ENCODE measurements at regions of chr4 and their contacts with region 1.

Region 1: GRCh38 chr4:176383273-176384077 is 63.7 kb downstream of the SPCS3 start:
- DNase-seq: peak in 2 of 5 donors; percentile 11 to 21
- ATAC-seq: peak in 3 of 4 donors; percentile 12 to 74 (median 32)
- H3K4me3 ChIP-seq: peak overlapping the region in 6 of 12 donors; percentile 4 to 33 (median 10)
- H3K27ac ChIP-seq: peak overlapping the region in 10 of 12 donors; percentile 12 to 81 (median 56)
- H3K4me1 ChIP-seq: peaks cover 0 to 21% (median 0%) of the 10 kb centered on the region in 12 donors
- H3K27me3 ChIP-seq: no peaks in the 10 kb centered on the region
- CTCF ChIP-seq: no peak
- POLR2A ChIP-seq: no peak

Region 2: GRCh38 chr4:176492646-176493302 is 109.3 kb after region 1 on chr4:
- intact Hi-C with region 1: loop called in 6 of 10 experiments (anchors 5 to 10 kb)
- DNase-seq: no peak
- ATAC-seq: peak; percentile 72 to 89 (median 77)
- H3K4me3 ChIP-seq: peak overlapping the region in 3 of 12 donors; percentile 13 to 28 (median 20)
- H3K27ac ChIP-seq: peak overlapping the region in 11 of 12 donors; percentile 14 to 76 (median 56)
- H3K4me1 ChIP-seq: peaks cover 0 to 3% (median 0%) of the 10 kb centered on the region in 12 donors
- H3K27me3 ChIP-seq: no peaks in the 10 kb centered on the region
- CTCF ChIP-seq: no peak
- POLR2A ChIP-seq: no peak

Region 3: DNA sequence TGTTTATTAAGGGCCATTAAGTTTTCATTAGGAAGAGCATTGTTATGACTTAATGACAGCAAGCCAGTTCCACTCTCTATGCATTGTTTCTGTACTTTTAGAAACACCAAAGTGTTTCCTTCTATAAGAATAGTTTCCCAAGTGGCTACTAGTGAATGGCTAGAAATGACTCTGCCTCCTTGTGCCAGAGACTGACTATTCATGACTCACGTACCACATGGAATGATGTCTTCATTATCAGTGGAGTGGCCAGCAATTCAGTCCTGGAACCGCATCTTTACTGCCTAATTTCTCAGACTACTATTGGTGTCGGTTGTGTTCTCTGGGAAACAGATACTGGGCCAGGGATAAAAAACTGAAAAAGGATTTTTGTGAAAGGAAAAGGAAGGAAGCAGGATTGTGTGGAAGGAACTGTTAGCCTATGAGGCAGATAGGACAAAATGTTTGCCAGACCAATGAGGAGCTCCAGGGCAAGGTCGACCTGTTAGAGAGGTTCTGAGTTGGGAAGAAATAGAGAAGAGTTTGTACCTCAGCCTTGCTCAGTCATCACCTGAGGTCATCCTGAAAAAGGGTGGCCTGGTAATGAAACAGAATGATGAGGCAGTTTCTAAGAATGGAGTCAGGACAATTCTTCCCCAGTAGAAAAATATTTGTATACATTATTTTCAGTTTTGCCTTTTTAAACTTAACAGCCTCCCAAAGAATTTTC is 154.9 kb after region 1 on chr4:
- intact Hi-C with region 1: loop called in 3 of 10 experiments (anchors 2 to 10 kb)
- DNase-seq: peak in 1 of 5 donors; percentile 17
- ATAC-seq: peak; percentile 15 to 74 (median 48)
- H3K4me3 ChIP-seq: no peak overlapping the region
- H3K27ac ChIP-seq: peak overlapping the region in 9 of 12 donors; percentile 40 to 79 (median 62)
- H3K4me1 ChIP-seq: peaks cover 0 to 13% (median 0%) of the 10 kb centered on the region in 12 donors
- H3K27me3 ChIP-seq: no peaks in the 10 kb centered on the region
- CTCF ChIP-seq: no peak
- POLR2A ChIP-seq: no peak

Region 4: DNA sequence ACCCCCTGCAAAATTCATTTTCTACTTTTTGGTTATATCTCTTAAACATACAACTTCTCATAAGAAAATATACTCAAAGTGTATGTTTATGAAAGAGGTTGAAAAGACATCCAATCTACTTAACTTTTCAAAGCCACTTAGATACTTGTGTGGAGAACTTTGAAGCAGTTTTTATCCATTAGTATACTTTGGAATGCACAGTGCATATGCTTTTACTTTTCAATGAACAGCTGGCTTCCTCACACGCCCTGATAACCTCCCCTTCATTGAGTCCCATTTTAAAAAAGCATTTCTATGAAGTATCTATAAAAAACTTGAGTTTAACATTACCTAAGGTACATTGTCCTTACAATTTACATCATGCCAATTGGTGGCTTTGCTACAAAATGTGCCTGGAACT is 335.4 kb after region 1 on chr4:
- intact Hi-C with region 1: loop called in 1 of 10 experiments (anchors 10 kb)
- DNase-seq: no peak
- ATAC-seq: no peak
- H3K4me3 ChIP-seq: no peak overlapping the region
- H3K27ac ChIP-seq: no peak overlapping the region
- H3K4me1 ChIP-seq: peaks cover 0 to 5% (median 0%) of the 10 kb centered on the region in 12 donors
- H3K27me3 ChIP-seq: no peaks in the 10 kb centered on the region
- CTCF ChIP-seq: no peak
- POLR2A ChIP-seq: no peak

Region 5: GRCh38 chr4:176949029-176949428 is 565.6 kb after region 1 on chr4:
- intact Hi-C with region 1: no loop called
- DNase-seq: peak in 2 of 5 donors; percentile 28
- ATAC-seq: peak in 1 of 4 donors; percentile 14
- H3K4me3 ChIP-seq: no peak overlapping the region
- H3K27ac ChIP-seq: no peak overlapping the region
- H3K4me1 ChIP-seq: no peaks in the 10 kb centered on the region
- H3K27me3 ChIP-seq: no peaks in the 10 kb centered on the region
- CTCF ChIP-seq: no peak
- POLR2A ChIP-seq: no peak